Activated CD4-positive, alpha-beta T cell treated with anti-CD3 and anti-CD28 coated beads for 36 hours (primary cell): ENCODE measurements at regions of chr14 and their contacts with region 1.

Region 1: GRCh38 chr14:24351517-24351916 is 11.7 kb upstream of the RIPK3 start:
- DNase-seq: no peak
- ATAC-seq: no peak
- H3K4me3 Mint-ChIP-seq: no peak overlapping the region
- H3K27ac Mint-ChIP-seq: no peak overlapping the region
- H3K4me1 Mint-ChIP-seq: peaks cover 4% of the 10 kb centered on the region
- H3K27me3 Mint-ChIP-seq: peaks cover 33% of the 10 kb centered on the region

Region 2: GRCh38 chr14:24398653-24399446 is 47.3 kb after region 1 on chr14 and contains the start of gene NYNRIN:
- CTCF ChIA-PET with region 1: no interaction called
- POLR2A ChIA-PET with region 1: no interaction called
- intact Hi-C with region 1: no loop called
- DNase-seq: peak; percentile 44
- ATAC-seq: peak; percentile 76
- H3K4me3 Mint-ChIP-seq: peak within 1 kb of the TSS; percentile 13
- H3K27ac Mint-ChIP-seq: no peak within 1 kb of the TSS
- H3K4me1 Mint-ChIP-seq: peaks cover 4% of the 10 kb centered on the region
- H3K27me3 Mint-ChIP-seq: peaks cover 4% of the 10 kb centered on the region
- total RNA-seq, gene NYNRIN: 0.07 to 0.16 TPM

Region 3: GRCh38 chr14:24411443-24412389 is 60.2 kb after region 1 on chr14:
- CTCF ChIA-PET with region 1: interaction called, 4 read pairs
- POLR2A ChIA-PET with region 1: no interaction called
- intact Hi-C with region 1: loop called in 1 of 2 experiments (anchors 5 kb)
- DNase-seq: peak; percentile 54
- ATAC-seq: peak; percentile 70
- H3K4me3 Mint-ChIP-seq: no peak overlapping the region
- H3K27ac Mint-ChIP-seq: no peak overlapping the region
- H3K4me1 Mint-ChIP-seq: no peaks in the 10 kb centered on the region
- H3K27me3 Mint-ChIP-seq: no peaks in the 10 kb centered on the region